Psoas muscle (tissue), 8 donors: ENCODE measurements at regions of chr5 and their contacts with region 1.

Region 1: GRCh38 chr5:72355706-72356299 is 35.6 kb downstream of the PTCD2 start:
- DNase-seq: peak in 1 of 2 donors; percentile 58
- ATAC-seq: peak; percentile 84 to 95 (median 90)
- H3K4me3 ChIP-seq: no peak overlapping the region
- H3K27ac ChIP-seq: no peak overlapping the region
- H3K4me1 ChIP-seq: no peaks in the 10 kb centered on the region
- H3K27me3 ChIP-seq: no peaks in the 10 kb centered on the region
- CTCF ChIP-seq: peak; percentile 63

Region 2: DNA sequence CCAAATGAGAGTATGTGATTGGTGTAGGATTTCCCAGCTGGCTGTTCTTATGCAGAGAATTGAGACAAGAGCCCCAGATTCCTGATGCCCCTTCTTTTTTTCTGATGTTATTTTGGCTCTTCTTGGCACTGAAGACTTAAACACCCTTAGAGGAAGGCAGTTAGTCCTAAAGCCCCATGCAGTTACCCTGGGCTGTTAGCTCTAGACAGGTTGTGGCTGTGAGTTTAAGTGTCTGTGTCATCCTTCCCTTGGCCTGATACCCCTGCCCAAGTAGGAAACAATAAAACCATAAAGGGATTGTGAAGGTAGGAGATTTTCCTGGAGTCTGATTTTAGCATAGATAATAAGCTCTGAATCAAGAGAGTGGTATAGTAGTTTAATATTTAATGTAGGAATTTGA is 473.9 kb after region 1 on chr5:
- intact Hi-C with region 1: loop called in 1 of 2 experiments (anchors 5 kb)
- DNase-seq: no peak
- ATAC-seq: no peak
- H3K4me3 ChIP-seq: no peak overlapping the region
- H3K27ac ChIP-seq: peak overlapping the region; percentile 7
- H3K4me1 ChIP-seq: peaks cover 79% of the 10 kb centered on the region
- H3K27me3 ChIP-seq: no peaks in the 10 kb centered on the region
- CTCF ChIP-seq: no peak

Region 3: GRCh38 chr5:72842816-72843215 is 487.0 kb after region 1 on chr5:
- intact Hi-C with region 1: loop called in 1 of 2 experiments (anchors 5 kb)
- DNase-seq: no peak
- ATAC-seq: peak; percentile 54 to 82 (median 71)
- H3K4me3 ChIP-seq: no peak overlapping the region
- H3K27ac ChIP-seq: peak overlapping the region; percentile 65
- H3K4me1 ChIP-seq: peaks cover 78% of the 10 kb centered on the region
- H3K27me3 ChIP-seq: no peaks in the 10 kb centered on the region
- CTCF ChIP-seq: no peak